ENCODE measurements at regions of chr19 and their contacts with region 1.

Region 1: DNA sequence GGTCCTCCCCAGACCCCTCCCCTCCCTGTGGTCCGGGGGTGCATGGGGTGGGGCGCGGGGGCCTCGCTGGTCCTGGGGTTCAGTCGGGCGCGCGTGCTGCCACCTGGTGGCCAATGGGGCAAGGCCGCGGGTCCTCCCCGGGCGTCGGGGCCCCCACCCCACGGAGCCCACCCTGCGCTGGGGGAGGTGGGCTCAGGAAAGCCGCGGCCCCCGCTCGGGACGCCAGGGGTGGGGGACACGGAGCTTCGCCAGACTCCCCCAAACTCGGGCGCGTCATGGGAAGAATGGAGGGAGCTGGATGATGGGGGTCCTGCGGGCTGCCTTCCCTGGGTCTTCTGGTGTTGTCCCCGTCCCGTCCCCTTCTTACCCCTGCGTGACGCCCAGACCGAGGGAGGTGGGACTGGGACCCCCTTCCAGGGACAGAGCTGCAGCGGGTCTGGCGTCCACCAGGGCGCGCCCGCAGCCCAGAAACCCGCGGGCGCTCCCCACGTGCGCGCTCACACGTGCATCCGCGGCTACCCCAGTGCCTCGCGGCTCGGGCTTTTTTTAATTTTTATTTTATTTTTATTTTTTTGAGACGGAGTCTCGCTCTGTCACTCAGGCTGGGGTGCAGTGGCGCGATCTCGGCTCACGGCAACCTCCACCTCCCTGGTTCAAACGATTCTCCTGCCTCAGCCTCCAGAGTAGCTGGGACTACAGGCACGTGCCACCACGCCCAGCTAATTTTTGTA is 19.8 kb upstream of the TCF3 start:
- DNase-seq: peak in 4 of 5 donors; percentile 32 to 57 (median 50)
- H3K4me3 ChIP-seq: no peak overlapping the region
- H3K4me3 Mint-ChIP-seq: no peak overlapping the region
- H3K27ac ChIP-seq: no peak overlapping the region
- H3K27ac Mint-ChIP-seq: no peak overlapping the region
- H3K4me1 ChIP-seq: peaks cover 14% of the 10 kb centered on the region
- H3K4me1 Mint-ChIP-seq: peaks cover 6 to 16% (median 8%) of the 10 kb centered on the region in 4 donors
- H3K27me3 ChIP-seq: peaks cover 15% of the 10 kb centered on the region
- H3K27me3 Mint-ChIP-seq: peaks cover 30 to 39% of the 10 kb centered on the region in 2 donors

Region 2: GRCh38 chr19:1168877-1169791 is 503.1 kb before region 1 on chr19:
- CTCF ChIA-PET with region 1: no interaction called
- POLR2A ChIA-PET with region 1: no interaction called
- intact Hi-C with region 1: no loop called
- DNase-seq: no peak
- H3K4me3 ChIP-seq: no peak overlapping the region
- H3K4me3 Mint-ChIP-seq: peak overlapping the region in 2 of 8 donors; percentile 20 to 66
- H3K27ac ChIP-seq: no peak overlapping the region
- H3K27ac Mint-ChIP-seq: peak overlapping the region in 2 of 7 donors; percentile 74 to 77
- H3K4me1 ChIP-seq: peaks cover 37% of the 10 kb centered on the region
- H3K4me1 Mint-ChIP-seq: peaks cover 15 to 35% (median 24%) of the 10 kb centered on the region in 4 donors
- H3K27me3 ChIP-seq: no peaks in the 10 kb centered on the region
- H3K27me3 Mint-ChIP-seq: no peaks in the 10 kb centered on the region

Region 3: GRCh38 chr19:1540365-1540925 is 131.8 kb before region 1 on chr19:
- CTCF ChIA-PET with region 1: interaction called, 52 read pairs
- POLR2A ChIA-PET with region 1: no interaction called
- intact Hi-C with region 1: no loop called
- DNase-seq: no peak
- H3K4me3 ChIP-seq: no peak overlapping the region
- H3K4me3 Mint-ChIP-seq: no peak overlapping the region
- H3K27ac ChIP-seq: no peak overlapping the region
- H3K27ac Mint-ChIP-seq: no peak overlapping the region
- H3K4me1 ChIP-seq: no peaks in the 10 kb centered on the region
- H3K4me1 Mint-ChIP-seq: no peaks in the 10 kb centered on the region
- H3K27me3 ChIP-seq: no peaks in the 10 kb centered on the region
- H3K27me3 Mint-ChIP-seq: peaks cover 14 to 18% of the 10 kb centered on the region in 2 donors

Region 4: GRCh38 chr19:1551068-1552040 is 120.8 kb before region 1 on chr19:
- CTCF ChIA-PET with region 1: interaction called, 52 read pairs
- POLR2A ChIA-PET with region 1: interaction called, 3 read pairs
- intact Hi-C with region 1: no loop called
- DNase-seq: no peak
- H3K4me3 ChIP-seq: no peak overlapping the region
- H3K4me3 Mint-ChIP-seq: no peak overlapping the region
- H3K27ac ChIP-seq: no peak overlapping the region
- H3K27ac Mint-ChIP-seq: peak overlapping the region in 1 of 7 donors; percentile 63
- H3K4me1 ChIP-seq: no peaks in the 10 kb centered on the region
- H3K4me1 Mint-ChIP-seq: peaks cover 0 to 2% (median 0%) of the 10 kb centered on the region in 4 donors
- H3K27me3 ChIP-seq: no peaks in the 10 kb centered on the region
- H3K27me3 Mint-ChIP-seq: peaks cover 3 to 15% of the 10 kb centered on the region in 2 donors

Region 5: DNA sequence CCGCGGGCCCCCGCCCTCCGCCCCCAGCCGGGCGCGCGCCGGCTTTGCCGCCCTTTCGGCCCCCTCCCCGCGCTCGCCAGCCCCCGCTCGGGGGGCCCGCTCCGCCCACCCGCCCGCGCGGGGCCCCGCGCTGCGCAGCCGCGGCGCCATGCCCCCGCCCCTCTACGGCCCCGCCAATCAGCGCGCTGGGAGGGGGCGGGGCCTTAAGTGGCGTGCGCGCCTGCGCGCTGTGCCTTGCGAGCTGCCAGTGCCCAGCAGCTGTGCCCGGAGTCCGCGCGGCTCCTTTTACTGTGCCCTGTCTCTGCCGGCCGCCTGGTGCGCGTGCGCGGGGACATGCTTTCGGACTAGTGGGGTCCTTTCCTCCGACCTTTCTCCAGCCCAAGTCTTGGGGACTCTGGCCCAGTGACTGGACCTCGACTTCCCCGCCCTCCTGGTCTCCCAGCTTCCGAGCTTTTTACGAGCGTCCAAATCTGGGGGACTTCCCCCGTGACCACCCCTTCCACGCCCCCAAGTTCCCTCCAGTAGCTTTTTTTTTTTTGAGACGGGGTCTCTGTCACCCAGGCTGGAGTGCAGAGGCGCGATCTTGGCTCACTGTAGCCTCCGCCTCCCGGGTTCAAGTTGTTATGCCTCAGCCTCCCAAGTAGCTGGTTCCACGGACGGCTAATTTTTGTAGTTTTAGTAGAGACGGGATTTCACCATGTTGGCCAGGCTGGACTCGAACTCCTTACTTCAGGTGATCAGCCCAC is 79.3 kb before region 1 on chr19 and contains the start of gene MBD3:
- CTCF ChIA-PET with region 1: interaction called, 6 read pairs
- POLR2A ChIA-PET with region 1: interaction called, 3 read pairs
- intact Hi-C with region 1: loop called (anchors 1 kb)
- DNase-seq: peak; percentile 83 to 90 (median 88)
- H3K4me3 ChIP-seq: peak within 1 kb of the TSS; percentile 30 to 86
- H3K4me3 Mint-ChIP-seq: peak within 1 kb of the TSS; percentile 87 to 93 (median 89)
- H3K27ac ChIP-seq: peak within 1 kb of the TSS; percentile 88
- H3K27ac Mint-ChIP-seq: peak within 1 kb of the TSS; percentile 90 to 96 (median 92)
- H3K4me1 ChIP-seq: peaks cover 24% of the 10 kb centered on the region
- H3K4me1 Mint-ChIP-seq: peaks cover 9 to 26% (median 15%) of the 10 kb centered on the region in 4 donors
- H3K27me3 ChIP-seq: no peaks in the 10 kb centered on the region
- H3K27me3 Mint-ChIP-seq: no peaks in the 10 kb centered on the region
- total RNA-seq, gene MBD3: 56.9 to 62.8 TPM

Region 6: DNA sequence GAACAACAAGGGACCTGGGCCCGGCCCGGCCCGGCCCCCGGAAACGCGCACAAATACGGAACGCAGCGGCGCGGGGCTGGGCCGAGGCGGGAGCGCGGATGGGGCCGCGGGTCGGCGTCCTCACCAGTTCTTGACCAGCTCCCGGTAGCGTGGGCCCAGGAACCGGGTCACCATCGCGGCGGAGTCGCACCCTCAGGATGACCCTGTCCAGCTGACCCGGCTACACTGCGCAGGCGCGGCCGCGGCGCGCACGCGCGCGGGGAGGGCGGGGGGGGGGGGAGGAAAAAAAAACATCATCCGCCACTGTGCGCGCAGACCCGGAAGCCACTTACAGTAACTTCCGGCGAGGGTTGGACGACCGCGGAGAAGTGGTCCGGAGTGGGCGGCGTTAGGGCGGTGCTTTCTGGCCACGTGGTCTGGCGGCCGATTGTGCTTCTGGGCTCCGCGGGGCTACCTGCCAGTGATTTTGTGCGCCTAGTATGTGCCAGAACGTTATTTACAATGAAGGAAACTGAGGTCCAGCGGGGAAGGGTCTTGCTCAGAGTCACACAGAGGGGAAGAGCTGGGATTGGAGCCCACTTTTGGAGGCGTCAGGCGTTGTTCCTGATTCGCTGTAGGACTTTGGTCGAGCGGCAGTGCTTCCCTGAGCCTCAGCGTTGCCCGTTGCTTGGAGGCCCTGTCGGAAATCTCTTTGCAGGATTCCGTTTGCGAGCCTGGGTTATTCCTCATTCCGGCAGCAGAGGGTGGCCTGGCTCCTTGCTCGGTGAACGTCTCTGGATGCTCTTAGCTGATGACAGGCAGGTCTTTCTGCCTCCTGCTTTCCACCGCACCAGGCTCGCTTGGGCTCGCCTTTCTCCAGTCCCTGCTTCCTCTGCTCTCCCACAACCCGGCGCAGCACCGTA is 66.7 kb before region 1 on chr19 and contains the start of gene UQCR11:
- CTCF ChIA-PET with region 1: interaction called, 25 read pairs
- POLR2A ChIA-PET with region 1: interaction called, 9 read pairs
- intact Hi-C with region 1: loop called (anchors 1 kb)
- DNase-seq: peak; percentile 87 to 95 (median 91)
- H3K4me3 ChIP-seq: peak within 1 kb of the TSS; percentile 80 to 85
- H3K4me3 Mint-ChIP-seq: peak within 1 kb of the TSS; percentile 94 to 99 (median 96)
- H3K27ac ChIP-seq: peak within 1 kb of the TSS; percentile 94
- H3K27ac Mint-ChIP-seq: peak within 1 kb of the TSS; percentile 98 to 100 (median 99)
- H3K4me1 ChIP-seq: peaks cover 56% of the 10 kb centered on the region
- H3K4me1 Mint-ChIP-seq: peaks cover 20 to 70% (median 47%) of the 10 kb centered on the region in 4 donors
- H3K27me3 ChIP-seq: no peaks in the 10 kb centered on the region
- H3K27me3 Mint-ChIP-seq: no peaks in the 10 kb centered on the region
- total RNA-seq, gene UQCR11: 157 to 158 TPM

Region 7: DNA sequence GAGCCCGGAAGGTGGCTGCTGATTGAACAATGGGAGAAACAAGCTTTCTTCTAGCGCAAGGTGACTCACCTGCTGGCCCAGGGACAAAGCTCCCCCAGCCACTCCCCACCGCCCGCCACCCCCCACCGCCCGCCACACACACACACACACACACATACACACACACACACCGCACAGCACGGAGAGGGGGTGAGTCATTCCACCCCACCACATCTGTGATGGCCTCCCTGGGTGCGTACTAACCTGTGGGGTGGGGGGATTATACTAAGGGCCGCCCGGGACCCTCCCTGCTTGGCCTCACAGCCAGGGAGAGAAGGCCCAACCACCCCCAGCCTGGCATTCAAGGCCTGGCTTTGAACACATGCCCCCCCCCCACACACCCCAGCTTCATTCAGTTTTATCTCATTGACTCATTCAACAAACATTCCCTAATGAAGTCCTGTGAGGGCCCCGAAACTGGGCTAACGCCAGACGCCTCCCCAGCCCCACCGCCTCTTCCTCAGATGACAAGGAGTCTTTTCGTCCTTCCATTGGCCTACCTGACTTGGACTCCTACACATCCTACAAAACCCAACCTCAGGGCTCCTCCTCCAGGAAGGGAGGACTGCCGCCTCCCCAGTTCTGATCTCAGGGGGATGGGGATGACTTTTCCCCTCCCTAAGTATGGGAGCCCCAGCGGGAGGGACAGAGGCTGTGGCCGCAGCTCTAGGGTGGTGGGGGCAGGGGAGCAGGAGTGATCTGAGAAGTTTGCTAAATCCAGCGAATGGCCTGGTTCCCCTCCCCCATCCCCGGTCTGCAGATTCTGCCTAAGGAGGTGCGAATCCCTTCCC is 75.3 kb after region 1 on chr19:
- CTCF ChIA-PET with region 1: no interaction called
- POLR2A ChIA-PET with region 1: no interaction called
- intact Hi-C with region 1: no loop called
- DNase-seq: peak in 1 of 5 donors; percentile 70
- H3K4me3 ChIP-seq: peak overlapping the region in 1 of 2 donors; percentile 34
- H3K4me3 Mint-ChIP-seq: peak overlapping the region in 7 of 8 donors; percentile 35 to 78 (median 64)
- H3K27ac ChIP-seq: no peak overlapping the region
- H3K27ac Mint-ChIP-seq: peak overlapping the region in 2 of 7 donors; percentile 32 to 75
- H3K4me1 ChIP-seq: peaks cover 37% of the 10 kb centered on the region
- H3K4me1 Mint-ChIP-seq: peaks cover 7 to 24% (median 11%) of the 10 kb centered on the region in 4 donors
- H3K27me3 ChIP-seq: peaks cover 66% of the 10 kb centered on the region
- H3K27me3 Mint-ChIP-seq: peaks cover 24 to 35% of the 10 kb centered on the region in 2 donors

Region 8: GRCh38 chr19:1767464-1767933 is 95.3 kb after region 1 on chr19:
- CTCF ChIA-PET with region 1: interaction called, 6 read pairs
- POLR2A ChIA-PET with region 1: no interaction called
- intact Hi-C with region 1: loop called (anchors 1 kb)
- DNase-seq: peak; percentile 40 to 61 (median 47)
- H3K4me3 ChIP-seq: no peak overlapping the region
- H3K4me3 Mint-ChIP-seq: no peak overlapping the region
- H3K27ac ChIP-seq: no peak overlapping the region
- H3K27ac Mint-ChIP-seq: no peak overlapping the region
- H3K4me1 ChIP-seq: peaks cover 4% of the 10 kb centered on the region
- H3K4me1 Mint-ChIP-seq: peaks cover 0 to 2% (median 0%) of the 10 kb centered on the region in 4 donors
- H3K27me3 ChIP-seq: peaks cover 54% of the 10 kb centered on the region
- H3K27me3 Mint-ChIP-seq: peaks cover 41 to 51% of the 10 kb centered on the region in 2 donors

Region 9: GRCh38 chr19:1825909-1826556 is 153.8 kb after region 1 on chr19:
- CTCF ChIA-PET with region 1: interaction called, 6 read pairs
- POLR2A ChIA-PET with region 1: no interaction called
- intact Hi-C with region 1: loop called (anchors 10 kb)
- DNase-seq: peak; percentile 70 to 75 (median 73)
- H3K4me3 ChIP-seq: no peak overlapping the region
- H3K4me3 Mint-ChIP-seq: peak overlapping the region in 2 of 8 donors; percentile 2 to 59
- H3K27ac ChIP-seq: no peak overlapping the region
- H3K27ac Mint-ChIP-seq: peak overlapping the region in 1 of 7 donors; percentile 47
- H3K4me1 ChIP-seq: peaks cover 6% of the 10 kb centered on the region
- H3K4me1 Mint-ChIP-seq: peaks cover 0 to 9% (median 2%) of the 10 kb centered on the region in 4 donors
- H3K27me3 ChIP-seq: no peaks in the 10 kb centered on the region
- H3K27me3 Mint-ChIP-seq: no peaks in the 10 kb centered on the region

Measured in CD4-positive, alpha-beta memory T cell (primary cell).